Body of pancreas (tissue), 4 donors: ENCODE measurements at regions of chr4 and their contacts with region 1.

Region 1: GRCh38 chr4:19224820-19225219 is 1026.9 kb upstream of the SLIT2 start:
- DNase-seq: no peak
- ATAC-seq: peak; percentile 47
- H3K4me3 ChIP-seq: no peak overlapping the region
- H3K27ac ChIP-seq: no peak overlapping the region
- H3K4me1 ChIP-seq: no peaks in the 10 kb centered on the region
- H3K27me3 ChIP-seq: peaks cover 0 to 3% of the 10 kb centered on the region in 2 donors
- CTCF ChIP-seq: peak in 6 of 7 experiments; percentile 17 to 46 (median 34)
- POLR2A ChIP-seq: no peak

Region 2: DNA sequence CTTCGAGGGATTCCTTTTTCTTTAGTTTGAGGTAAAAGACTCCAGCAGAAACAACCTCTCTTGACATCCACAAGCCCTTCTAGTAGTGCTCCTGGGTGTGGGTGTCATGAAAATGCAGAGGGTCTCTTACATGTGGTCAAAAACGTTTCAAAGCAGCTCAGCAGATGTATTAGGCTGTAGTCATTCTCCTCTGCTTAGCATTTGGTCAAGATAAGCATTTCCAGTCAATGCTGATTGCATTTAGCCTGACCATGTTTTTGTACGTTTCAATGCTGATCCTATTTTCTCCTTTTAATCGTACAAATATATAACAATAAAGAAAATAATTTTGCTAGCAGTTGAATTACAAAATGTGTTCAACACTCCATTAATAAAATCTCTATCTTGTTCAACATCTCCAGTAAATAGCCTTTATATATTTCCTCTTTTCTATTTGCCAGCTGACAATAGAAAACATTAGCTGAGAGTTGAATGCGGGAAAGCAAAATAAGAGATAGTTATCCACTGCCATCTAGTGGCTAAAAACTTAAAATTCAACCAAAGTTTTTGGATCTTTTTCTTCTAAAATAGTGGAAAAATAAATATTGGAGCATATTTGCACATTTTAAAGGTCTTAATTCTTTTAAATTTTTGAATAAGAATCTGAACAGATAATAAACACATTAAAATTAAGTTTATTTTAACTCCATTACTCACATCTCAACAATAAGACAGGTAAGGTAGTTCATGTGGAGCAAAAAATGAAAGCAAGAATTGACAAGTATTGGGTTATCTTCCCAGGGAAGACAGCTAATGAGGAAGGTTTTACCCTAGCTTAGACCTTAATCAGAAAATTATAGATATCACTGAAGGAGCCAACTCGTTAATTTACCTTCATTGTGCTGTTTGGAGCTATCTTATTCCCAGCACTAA is 1460.3 kb after region 1 on chr4:
- intact Hi-C with region 1: loop called (anchors 10 kb)
- DNase-seq: no peak
- ATAC-seq: no peak
- H3K4me3 ChIP-seq: no peak overlapping the region
- H3K27ac ChIP-seq: no peak overlapping the region
- H3K4me1 ChIP-seq: no peaks in the 10 kb centered on the region
- H3K27me3 ChIP-seq: no peaks in the 10 kb centered on the region
- CTCF ChIP-seq: peak; percentile 15 to 65 (median 59)
- POLR2A ChIP-seq: no peak